ENCODE measurements at regions of chr6 and their contacts with region 1.

Region 1: DNA sequence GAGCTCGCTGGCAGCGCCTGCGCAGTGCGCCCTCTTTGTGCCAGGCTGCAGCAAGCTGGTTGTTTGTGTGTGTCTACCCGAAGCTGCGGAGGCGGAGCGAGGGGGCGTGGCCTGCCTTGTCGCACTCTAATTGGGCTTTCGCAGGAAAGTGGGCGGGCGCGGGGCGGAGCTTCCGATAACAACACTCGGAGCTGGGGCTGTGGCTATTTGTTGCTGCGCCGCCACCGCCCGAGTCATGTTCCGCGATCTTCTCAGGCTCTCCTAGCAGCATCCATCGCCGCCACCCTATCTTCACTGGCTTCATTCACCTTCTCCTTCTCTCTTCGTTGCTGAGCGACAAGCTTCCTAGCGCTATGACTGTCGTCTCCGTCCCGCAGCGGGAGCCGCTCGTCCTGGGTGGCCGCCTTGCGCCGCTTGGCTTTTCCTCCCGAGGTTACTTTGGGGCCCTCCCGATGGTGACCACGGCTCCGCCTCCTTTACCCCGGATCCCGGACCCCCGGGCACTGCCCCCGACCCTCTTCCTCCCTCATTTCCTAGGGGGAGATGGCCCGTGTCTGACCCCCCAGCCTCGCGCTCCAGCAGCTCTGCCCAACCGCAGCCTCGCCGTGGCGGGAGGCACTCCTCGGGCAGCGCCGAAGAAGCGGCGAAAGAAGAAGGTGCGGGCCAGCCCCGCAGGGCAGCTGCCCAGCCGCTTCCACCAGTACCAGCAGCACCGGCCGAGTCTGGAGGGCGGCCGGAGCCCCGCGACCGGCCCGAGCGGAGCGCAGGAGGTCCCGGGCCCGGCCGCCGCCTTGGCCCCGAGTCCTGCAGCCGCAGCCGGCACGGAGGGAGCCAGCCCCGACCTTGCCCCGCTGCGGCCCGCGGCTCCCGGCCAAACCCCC is at the start of gene PNRC1:
- DNase-seq: peak; percentile 100
- H3K4me3 Mint-ChIP-seq: peak within 1 kb of the TSS; percentile 82
- H3K27ac Mint-ChIP-seq: peak within 1 kb of the TSS; percentile 99
- H3K4me1 Mint-ChIP-seq: peaks cover 34% of the 10 kb centered on the region
- H3K27me3 Mint-ChIP-seq: no peaks in the 10 kb centered on the region
- total RNA-seq, gene PNRC1: 130 to 131 TPM

Region 2: GRCh38 chr6:88963139-88964090 is 117.4 kb before region 1 on chr6 and contains the start of gene RNGTT:
- CTCF ChIA-PET with region 1: interaction called, 7 read pairs
- POLR2A ChIA-PET with region 1: interaction called, 37 read pairs
- DNase-seq: peak; percentile 98
- H3K4me3 Mint-ChIP-seq: peak within 1 kb of the TSS; percentile 98
- H3K27ac Mint-ChIP-seq: peak within 1 kb of the TSS; percentile 80
- H3K4me1 Mint-ChIP-seq: peaks cover 35% of the 10 kb centered on the region
- H3K27me3 Mint-ChIP-seq: no peaks in the 10 kb centered on the region
- total RNA-seq, gene RNGTT: 18.6 TPM

Region 3: DNA sequence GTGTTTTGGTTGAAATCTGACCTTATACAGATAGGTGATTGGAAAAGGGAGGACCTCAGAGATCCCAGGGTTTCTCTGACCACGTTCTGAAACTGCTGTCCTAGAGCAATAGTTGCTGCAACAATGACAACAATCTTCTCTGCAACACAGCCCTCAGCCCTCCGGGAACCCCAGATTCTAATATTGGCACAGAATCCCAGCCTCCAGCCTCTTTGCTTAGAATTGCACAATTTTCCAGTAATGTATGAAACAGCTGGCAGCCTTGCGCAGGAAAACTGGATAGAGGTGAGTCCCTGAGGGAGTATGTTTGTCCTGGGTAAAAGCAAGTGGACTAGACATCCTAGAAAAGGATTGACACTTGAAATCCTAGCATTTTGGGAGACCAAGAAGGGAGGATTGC is 30.6 kb before region 1 on chr6:
- CTCF ChIA-PET with region 1: interaction called, 3 read pairs
- POLR2A ChIA-PET with region 1: interaction called, 71 read pairs
- DNase-seq: no peak
- H3K4me3 Mint-ChIP-seq: no peak overlapping the region
- H3K27ac Mint-ChIP-seq: no peak overlapping the region
- H3K4me1 Mint-ChIP-seq: peaks cover 20% of the 10 kb centered on the region
- H3K27me3 Mint-ChIP-seq: no peaks in the 10 kb centered on the region

Region 4: DNA sequence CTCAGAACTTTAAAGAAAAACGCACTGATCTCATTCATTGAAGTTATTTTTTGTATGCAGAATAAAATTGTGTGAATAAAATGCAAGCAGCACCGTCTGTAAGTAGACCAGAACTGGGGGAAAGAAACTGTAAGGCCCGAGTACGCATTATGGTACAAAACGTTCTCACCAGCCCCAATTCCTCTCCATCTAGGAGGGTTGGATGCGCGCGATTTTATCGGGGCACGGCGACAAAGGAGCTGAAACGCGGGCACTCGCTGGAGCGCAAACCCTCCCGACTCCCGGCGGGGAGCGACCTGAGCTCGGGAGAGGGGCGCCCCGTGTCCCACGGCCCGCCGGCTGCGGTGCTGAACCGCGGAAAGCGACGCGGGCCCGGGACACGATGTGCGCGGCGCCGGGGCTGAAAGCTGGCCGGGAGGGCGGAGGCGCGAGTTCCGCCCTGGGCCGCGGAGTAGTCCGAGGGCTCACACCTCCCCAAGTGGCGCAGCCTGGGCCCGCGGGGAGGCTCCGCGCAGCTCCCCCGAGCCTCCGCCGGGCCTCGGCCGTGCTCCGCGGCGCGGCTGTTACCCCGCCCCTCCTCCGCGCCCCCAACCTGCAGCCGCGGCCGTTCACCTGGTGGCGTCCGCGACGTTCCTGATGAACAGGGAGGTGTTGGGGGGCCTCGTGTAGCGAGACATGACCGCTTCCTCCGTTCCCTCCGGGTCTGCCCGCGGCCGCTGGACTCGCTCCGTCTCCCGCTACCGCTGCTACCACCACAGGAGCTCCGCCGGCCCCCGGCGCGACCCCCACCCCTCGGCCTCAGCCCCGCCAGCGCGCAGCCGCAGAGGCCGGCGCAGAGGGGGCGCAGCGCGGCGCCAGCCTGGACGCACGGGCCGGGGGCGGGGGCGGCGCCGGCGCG is 36.7 kb after region 1 on chr6 and contains the start of gene SRSF12:
- CTCF ChIA-PET with region 1: interaction called, 3 read pairs
- POLR2A ChIA-PET with region 1: interaction called, 17 read pairs
- DNase-seq: peak; percentile 36
- H3K4me3 Mint-ChIP-seq: peak within 1 kb of the TSS; percentile 68
- H3K27ac Mint-ChIP-seq: no peak within 1 kb of the TSS
- H3K4me1 Mint-ChIP-seq: peaks cover 5% of the 10 kb centered on the region
- H3K27me3 Mint-ChIP-seq: peaks cover 37% of the 10 kb centered on the region
- total RNA-seq, gene SRSF12: not detected

Region 5: GRCh38 chr6:89297695-89298351 is 217.0 kb after region 1 on chr6:
- CTCF ChIA-PET with region 1: no interaction called
- POLR2A ChIA-PET with region 1: interaction called, 24 read pairs
- DNase-seq: peak; percentile 86
- H3K4me3 Mint-ChIP-seq: peak overlapping the region; percentile 65
- H3K27ac Mint-ChIP-seq: peak overlapping the region; percentile 87
- H3K4me1 Mint-ChIP-seq: peaks cover 30% of the 10 kb centered on the region
- H3K27me3 Mint-ChIP-seq: no peaks in the 10 kb centered on the region

Region 6: DNA sequence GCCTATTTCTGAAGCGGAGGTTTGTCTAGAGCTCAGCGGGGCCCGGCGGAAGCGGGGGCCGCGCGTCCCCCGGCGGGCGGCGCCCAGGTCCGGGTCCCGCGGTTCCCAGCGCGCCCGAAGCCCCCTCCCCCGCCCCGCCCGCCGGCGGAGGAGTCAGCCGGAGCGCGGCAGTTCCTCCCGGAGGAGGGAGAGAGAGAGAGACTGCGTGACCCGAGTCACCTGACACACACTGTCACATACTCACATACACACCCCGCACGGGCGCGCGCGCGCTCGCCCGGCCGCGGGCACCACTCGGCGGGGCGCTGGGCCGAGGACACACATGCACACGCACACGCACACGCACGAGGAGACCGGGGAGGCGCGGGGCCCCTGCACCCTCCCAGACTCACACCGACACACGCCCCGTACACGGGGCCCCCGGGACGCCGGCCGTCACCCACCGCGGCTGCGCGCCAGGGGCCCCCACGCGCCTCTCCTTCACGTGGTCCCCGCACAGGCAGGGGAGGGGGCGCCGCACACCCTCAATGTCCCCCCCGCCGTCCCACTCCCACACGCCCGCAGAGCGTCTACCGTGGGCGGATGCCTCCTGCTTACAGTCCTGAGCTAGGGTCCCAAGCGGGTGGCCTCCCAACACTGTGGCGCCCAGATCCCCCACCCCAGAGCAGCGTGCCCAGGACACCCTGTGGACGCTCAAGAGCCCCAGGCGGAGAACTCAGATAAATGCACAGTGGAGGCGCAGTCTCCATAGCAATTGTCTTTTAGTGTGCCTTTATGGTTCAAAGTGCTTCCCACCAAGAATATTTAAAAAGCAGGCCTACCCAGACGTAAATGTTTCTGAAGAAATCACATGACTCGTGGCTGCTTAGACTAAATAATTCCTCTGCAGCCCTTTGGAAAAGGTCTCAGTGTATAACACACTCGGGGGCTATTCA is 331.6 kb after region 1 on chr6 and contains the start of gene RRAGD:
- CTCF ChIA-PET with region 1: no interaction called
- POLR2A ChIA-PET with region 1: interaction called, 12 read pairs
- DNase-seq: peak; percentile 70
- H3K4me3 Mint-ChIP-seq: peak within 1 kb of the TSS; percentile 89
- H3K27ac Mint-ChIP-seq: no peak within 1 kb of the TSS
- H3K4me1 Mint-ChIP-seq: peaks cover 18% of the 10 kb centered on the region
- H3K27me3 Mint-ChIP-seq: peaks cover 46% of the 10 kb centered on the region
- total RNA-seq, gene RRAGD: 11.3 to 11.6 TPM

Measured in activated CD4-positive, alpha-beta memory T cell treated with anti-CD3 and anti-CD28 coated beads, Interleukin-2, amount 10 ng/mL, durations not matched to agents 7 days and 5 days (primary cell).